Esophagus squamous epithelium (tissue), 5 donors: ENCODE measurements at regions of chr13 and their contacts with region 1.

Region 1: GRCh38 chr13:98672944-98673545 is 79.4 kb downstream of the SLC15A1 start:
- DNase-seq: no peak
- H3K4me3 ChIP-seq: no peak overlapping the region
- H3K27ac ChIP-seq: no peak overlapping the region
- H3K4me1 ChIP-seq: peaks cover 0 to 42% (median 8%) of the 10 kb centered on the region in 3 donors
- H3K27me3 ChIP-seq: no peaks in the 10 kb centered on the region
- CTCF ChIP-seq: peak; percentile 75 to 89 (median 84)
- POLR2A ChIP-seq: no peak

Region 2: DNA sequence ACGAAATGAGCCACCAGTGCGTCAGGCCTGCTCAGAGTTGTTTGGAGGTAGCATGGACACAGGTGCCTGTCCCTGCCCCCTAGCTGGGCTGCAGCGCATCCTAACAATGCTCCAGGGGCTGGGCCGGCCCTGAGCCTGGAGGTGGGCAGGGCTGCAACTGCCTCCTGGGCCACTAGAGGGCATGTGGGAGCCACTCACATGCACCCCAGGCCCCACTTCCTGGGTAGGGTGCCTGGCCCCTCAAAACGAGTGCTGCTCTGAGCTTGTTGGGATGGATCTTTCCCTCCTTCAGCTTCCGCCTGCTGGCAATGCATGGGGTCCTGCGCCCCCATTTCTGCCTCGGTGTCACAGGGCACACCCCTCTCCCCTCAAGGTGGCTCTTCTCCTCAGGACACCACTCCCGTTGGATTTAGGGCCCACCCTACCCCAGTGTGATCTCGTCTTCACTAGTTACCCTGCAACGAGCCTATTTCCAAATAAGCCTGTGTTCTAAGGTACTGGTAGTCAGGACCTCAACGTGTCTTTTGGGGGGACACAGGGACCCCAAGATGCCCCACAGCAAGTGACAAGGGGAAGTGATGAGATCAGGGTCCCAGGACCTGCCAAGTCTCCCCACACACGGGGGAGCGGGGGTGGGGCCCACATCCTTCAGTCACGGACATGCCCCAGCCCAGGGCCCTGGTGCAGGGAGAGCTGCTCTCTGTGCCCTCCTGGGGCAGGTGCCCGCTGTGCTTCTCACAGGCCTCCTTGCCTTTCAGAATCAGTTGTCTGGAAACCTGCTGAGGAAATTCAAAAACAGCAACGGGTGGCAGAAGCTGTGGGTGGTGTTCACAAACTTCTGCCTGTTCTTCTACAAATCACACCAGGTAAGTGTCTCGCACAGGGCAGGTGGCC is 227.5 kb before region 1 on chr13:
- intact Hi-C with region 1: loop called (anchors 5 kb)
- DNase-seq: no peak
- H3K4me3 ChIP-seq: peak overlapping the region in 1 of 4 donors; percentile 21
- H3K27ac ChIP-seq: peak overlapping the region; percentile 32 to 85 (median 51)
- H3K4me1 ChIP-seq: peaks cover 0 to 44% (median 16%) of the 10 kb centered on the region in 3 donors
- H3K27me3 ChIP-seq: no peaks in the 10 kb centered on the region
- CTCF ChIP-seq: peak; percentile 92 to 97 (median 94)
- POLR2A ChIP-seq: no peak

Region 3: DNA sequence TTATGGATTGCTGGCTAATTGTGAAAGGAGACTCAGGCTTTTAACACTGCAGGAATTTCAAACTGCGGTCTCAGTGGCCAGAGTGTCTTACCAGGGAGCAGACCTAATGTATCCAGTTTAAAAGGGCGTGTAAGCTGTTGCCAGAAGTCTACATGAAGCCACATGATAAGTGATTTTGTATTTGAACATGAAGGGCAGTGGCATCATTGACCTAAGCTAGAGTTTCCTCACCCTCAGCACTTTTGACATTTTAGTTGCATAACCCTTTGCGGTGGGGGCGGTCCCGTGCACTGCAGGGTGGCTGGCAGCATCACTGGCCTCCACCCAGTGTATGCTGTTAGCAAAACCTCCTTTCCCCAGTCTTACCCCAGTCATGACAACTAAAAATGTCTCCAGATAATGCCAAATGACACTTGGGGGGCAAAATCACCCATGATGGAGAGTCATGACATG is 608.8 kb after region 1 on chr13:
- intact Hi-C with region 1: no loop called
- DNase-seq: no peak
- H3K4me3 ChIP-seq: no peak overlapping the region
- H3K27ac ChIP-seq: peak overlapping the region; percentile 24 to 78 (median 67)
- H3K4me1 ChIP-seq: peaks cover 7 to 77% (median 29%) of the 10 kb centered on the region in 3 donors
- H3K27me3 ChIP-seq: no peaks in the 10 kb centered on the region
- CTCF ChIP-seq: no peak
- POLR2A ChIP-seq: peak in 1 of 4 donors; percentile 48